ENCODE measurements at regions of chr15 and their contacts with region 1.

Region 1: DNA sequence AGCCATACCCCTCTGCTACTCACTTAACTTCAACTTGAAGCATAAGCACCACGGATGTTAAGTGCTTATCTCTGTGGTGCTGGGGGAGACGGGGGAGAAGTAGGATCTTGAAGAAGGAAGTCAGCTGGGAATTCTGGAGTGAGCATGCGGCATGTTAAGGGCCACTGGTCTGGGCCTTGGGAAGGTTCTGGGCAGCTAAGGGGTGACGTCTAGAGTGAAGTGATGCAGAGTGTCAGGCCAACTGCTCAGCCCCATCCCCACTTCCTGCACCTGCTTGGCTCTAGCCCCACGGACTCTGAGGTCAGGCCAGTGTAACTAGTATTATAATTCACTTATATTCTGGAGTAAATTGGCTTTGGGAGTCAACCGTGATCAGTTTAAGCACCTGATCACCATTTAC is 228.6 kb downstream of the FMN1 start:
- DNase-seq: no peak
- ATAC-seq: no peak
- H3K4me3 Mint-ChIP-seq: no peak overlapping the region
- H3K27ac Mint-ChIP-seq: no peak overlapping the region
- H3K4me1 Mint-ChIP-seq: no peaks in the 10 kb centered on the region
- H3K27me3 Mint-ChIP-seq: peaks cover 10% of the 10 kb centered on the region
- CTCF ChIP-seq: no peak

Region 2: GRCh38 chr15:32923176-32923575 is 42.7 kb before region 1 on chr15:
- CTCF ChIA-PET with region 1: no interaction called
- POLR2A ChIA-PET with region 1: no interaction called
- intact Hi-C with region 1: no loop called
- DNase-seq: no peak
- ATAC-seq: no peak
- H3K4me3 Mint-ChIP-seq: no peak overlapping the region
- H3K27ac Mint-ChIP-seq: no peak overlapping the region
- H3K4me1 Mint-ChIP-seq: peaks cover 21% of the 10 kb centered on the region
- H3K27me3 Mint-ChIP-seq: peaks cover 1% of the 10 kb centered on the region
- CTCF ChIP-seq: no peak

Region 3: GRCh38 chr15:32983679-32984078 is 17.8 kb after region 1 on chr15:
- CTCF ChIA-PET with region 1: no interaction called
- POLR2A ChIA-PET with region 1: no interaction called
- intact Hi-C with region 1: loop called (anchors 2 kb)
- DNase-seq: no peak
- ATAC-seq: no peak
- H3K4me3 Mint-ChIP-seq: no peak overlapping the region
- H3K27ac Mint-ChIP-seq: no peak overlapping the region
- H3K4me1 Mint-ChIP-seq: no peaks in the 10 kb centered on the region
- H3K27me3 Mint-ChIP-seq: peaks cover 12% of the 10 kb centered on the region
- CTCF ChIP-seq: no peak

Region 4: GRCh38 chr15:33722005-33722672 is 756.2 kb after region 1 on chr15:
- CTCF ChIA-PET with region 1: no interaction called
- POLR2A ChIA-PET with region 1: no interaction called
- intact Hi-C with region 1: no loop called
- DNase-seq: no peak
- ATAC-seq: peak; percentile 85
- H3K4me3 Mint-ChIP-seq: no peak overlapping the region
- H3K27ac Mint-ChIP-seq: no peak overlapping the region
- H3K4me1 Mint-ChIP-seq: peaks cover 21% of the 10 kb centered on the region
- H3K27me3 Mint-ChIP-seq: no peaks in the 10 kb centered on the region
- CTCF ChIP-seq: no peak